ENCODE measurements at regions of chr12 and their contacts with region 1.

Region 1: GRCh38 chr12:9707864-9708808 is 24.8 kb downstream of the CLECL1 start:
- H3K4me3 ChIP-seq: no peak overlapping the region
- H3K27ac ChIP-seq: no peak overlapping the region
- H3K4me1 ChIP-seq: no peaks in the 10 kb centered on the region
- CTCF ChIP-seq: no peak

Region 2: GRCh38 chr12:9634177-9634803 is 73.8 kb before region 1 on chr12:
- CTCF ChIA-PET with region 1: interaction called, 87 read pairs
- POLR2A ChIA-PET with region 1: no interaction called
- H3K4me3 ChIP-seq: no peak overlapping the region
- H3K27ac ChIP-seq: no peak overlapping the region
- H3K4me1 ChIP-seq: no peaks in the 10 kb centered on the region
- CTCF ChIP-seq: no peak

Region 3: GRCh38 chr12:9647825-9648700 is 60.1 kb before region 1 on chr12:
- CTCF ChIA-PET with region 1: interaction called, 13 read pairs
- POLR2A ChIA-PET with region 1: interaction called, 3 read pairs
- H3K4me3 ChIP-seq: peak overlapping the region; percentile 76
- H3K27ac ChIP-seq: peak overlapping the region; percentile 80
- H3K4me1 ChIP-seq: peaks cover 4% of the 10 kb centered on the region
- CTCF ChIP-seq: no peak

Region 4: GRCh38 chr12:9797722-9798619 is 89.8 kb after region 1 on chr12:
- CTCF ChIA-PET with region 1: no interaction called
- POLR2A ChIA-PET with region 1: no interaction called
- H3K4me3 ChIP-seq: no peak overlapping the region
- H3K27ac ChIP-seq: no peak overlapping the region
- H3K4me1 ChIP-seq: no peaks in the 10 kb centered on the region
- CTCF ChIP-seq: peak; percentile 75